ENCODE measurements at regions of chr14 and their contacts with region 1.

Region 1: DNA sequence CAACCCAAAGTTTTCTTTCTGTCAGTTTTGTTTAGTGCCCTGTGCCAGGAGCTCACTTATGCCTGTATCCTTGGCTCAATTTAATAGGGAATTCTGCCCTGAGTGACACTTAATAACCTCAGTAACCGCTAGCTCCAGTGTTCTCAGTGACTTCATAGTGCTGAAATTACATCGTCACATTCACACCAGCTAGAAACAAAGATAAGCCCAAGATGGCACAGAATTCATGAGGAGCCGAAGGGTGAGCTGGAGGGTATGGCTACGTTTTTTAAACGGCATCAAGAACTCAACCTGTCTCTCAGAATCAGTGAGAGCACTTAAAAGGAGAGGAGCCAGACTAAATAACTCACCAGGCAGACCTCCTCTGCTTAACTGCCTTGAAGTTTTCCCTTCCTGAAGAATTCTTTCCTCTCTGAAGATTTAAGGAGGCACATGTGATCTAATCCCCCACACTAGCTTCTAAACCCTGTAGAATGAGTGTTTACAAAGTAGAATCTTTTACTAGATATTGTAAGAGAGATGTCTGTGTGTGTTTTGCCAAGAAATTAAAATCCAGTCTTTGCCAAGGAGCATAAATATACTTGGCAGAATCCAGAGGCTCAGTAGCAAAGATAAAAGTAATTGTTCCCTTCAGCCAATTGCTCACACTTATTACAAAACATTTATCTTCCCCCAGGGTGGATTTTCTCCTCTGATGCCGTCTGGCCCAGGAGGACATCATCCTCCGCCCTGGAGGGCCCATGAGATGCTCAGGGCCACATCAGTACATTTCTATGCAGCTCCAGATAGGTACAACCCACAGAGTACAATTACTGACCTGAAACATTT is 37.3 kb downstream of the PTGER2 start:
- DNase-seq: peak in 2 of 9 donors; percentile 2 to 10
- ATAC-seq: peak; percentile 54
- H3K4me3 ChIP-seq: peak overlapping the region; percentile 18
- H3K4me3 Mint-ChIP-seq: peak overlapping the region; percentile 48 to 94 (median 76)
- H3K27ac ChIP-seq: peak overlapping the region; percentile 59
- H3K27ac Mint-ChIP-seq: peak overlapping the region; percentile 81 to 100 (median 88)
- H3K4me1 ChIP-seq: peaks cover 46 to 53% of the 10 kb centered on the region in 2 donors
- H3K4me1 Mint-ChIP-seq: peaks cover 36 to 76% (median 62%) of the 10 kb centered on the region in 7 donors
- H3K27me3 ChIP-seq: no peaks in the 10 kb centered on the region
- H3K27me3 Mint-ChIP-seq: peaks cover 0 to 4% (median 0%) of the 10 kb centered on the region in 5 donors

Region 2: DNA sequence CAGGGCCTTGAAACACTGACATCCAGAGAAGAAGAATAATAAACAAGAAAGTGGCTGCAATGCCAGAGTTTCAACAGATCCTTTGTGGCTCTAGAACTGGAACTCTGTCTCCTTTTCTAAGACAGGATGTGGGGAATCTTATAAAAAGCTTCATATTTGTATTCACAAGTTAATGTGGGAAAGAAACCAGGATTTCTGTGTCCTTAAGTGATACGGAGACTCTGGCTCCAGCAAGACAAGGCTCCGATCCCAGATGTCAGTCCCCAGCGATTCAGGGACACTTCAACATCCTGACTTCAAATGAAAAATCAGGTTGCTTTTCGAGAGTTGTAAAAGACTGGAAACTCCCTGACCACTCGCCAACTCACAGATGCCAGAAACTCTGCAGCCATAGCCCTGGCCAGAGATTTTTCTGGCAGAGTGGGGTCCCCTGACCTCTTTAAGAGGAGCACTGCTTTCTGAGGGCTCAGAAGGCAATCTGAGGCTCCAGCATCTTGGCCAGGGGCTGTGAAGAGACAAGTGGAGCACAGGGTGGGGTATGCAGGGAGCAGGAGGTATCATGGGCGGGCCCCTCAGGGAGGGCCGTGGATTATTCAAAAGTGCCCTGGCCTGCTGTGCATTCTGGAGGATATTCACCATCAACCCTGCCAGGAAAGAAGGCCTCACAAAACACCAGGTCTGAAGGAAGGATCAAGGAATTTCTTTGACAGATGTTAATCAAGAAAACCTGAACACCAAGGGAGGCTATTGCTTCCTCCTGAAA is 1058.1 kb before region 1 on chr14:
- CTCF ChIA-PET with region 1: no interaction called
- POLR2A ChIA-PET with region 1: no interaction called
- intact Hi-C with region 1: no loop called
- DNase-seq: no peak
- ATAC-seq: no peak
- H3K4me3 ChIP-seq: no peak overlapping the region
- H3K4me3 Mint-ChIP-seq: no peak overlapping the region
- H3K27ac ChIP-seq: no peak overlapping the region
- H3K27ac Mint-ChIP-seq: no peak overlapping the region
- H3K4me1 ChIP-seq: no peaks in the 10 kb centered on the region
- H3K4me1 Mint-ChIP-seq: peaks cover 0 to 4% (median 0%) of the 10 kb centered on the region in 7 donors
- H3K27me3 ChIP-seq: no peaks in the 10 kb centered on the region
- H3K27me3 Mint-ChIP-seq: no peaks in the 10 kb centered on the region

Region 3: GRCh38 chr14:51865953-51866747 is 485.3 kb before region 1 on chr14:
- CTCF ChIA-PET with region 1: no interaction called
- POLR2A ChIA-PET with region 1: no interaction called
- intact Hi-C with region 1: loop called in 1 of 2 experiments (anchors 5 kb)
- DNase-seq: peak in 3 of 9 donors; percentile 33 to 44 (median 37)
- ATAC-seq: peak; percentile 72
- H3K4me3 ChIP-seq: no peak overlapping the region
- H3K4me3 Mint-ChIP-seq: peak overlapping the region in 2 of 10 donors; percentile 10 to 27
- H3K27ac ChIP-seq: peak overlapping the region; percentile 50
- H3K27ac Mint-ChIP-seq: peak overlapping the region in 1 of 9 donors; percentile 11
- H3K4me1 ChIP-seq: peaks cover 57 to 63% of the 10 kb centered on the region in 2 donors
- H3K4me1 Mint-ChIP-seq: peaks cover 16 to 44% (median 28%) of the 10 kb centered on the region in 7 donors
- H3K27me3 ChIP-seq: no peaks in the 10 kb centered on the region
- H3K27me3 Mint-ChIP-seq: no peaks in the 10 kb centered on the region

Region 4: GRCh38 chr14:52313903-52314594 is 37.4 kb before region 1 on chr14 and contains the start of gene PTGER2:
- CTCF ChIA-PET with region 1: no interaction called
- POLR2A ChIA-PET with region 1: interaction called, 3 read pairs
- intact Hi-C with region 1: loop called (anchors 1 kb)
- DNase-seq: peak; percentile 12 to 91 (median 34)
- ATAC-seq: peak; percentile 79
- H3K4me3 ChIP-seq: peak within 1 kb of the TSS; percentile 80
- H3K4me3 Mint-ChIP-seq: peak within 1 kb of the TSS; percentile 88 to 100 (median 98)
- H3K27ac ChIP-seq: peak within 1 kb of the TSS; percentile 62
- H3K27ac Mint-ChIP-seq: peak within 1 kb of the TSS; percentile 51 to 98 (median 92)
- H3K4me1 ChIP-seq: peaks cover 14 to 26% of the 10 kb centered on the region in 2 donors
- H3K4me1 Mint-ChIP-seq: peaks cover 48 to 81% (median 57%) of the 10 kb centered on the region in 7 donors
- H3K27me3 ChIP-seq: no peaks in the 10 kb centered on the region
- H3K27me3 Mint-ChIP-seq: peaks cover 0 to 5% (median 0%) of the 10 kb centered on the region in 5 donors
- total RNA-seq, gene PTGER2: 1.7 to 162 (median 15.2) TPM

Region 5: GRCh38 chr14:52338051-52338681 is 13.3 kb before region 1 on chr14:
- CTCF ChIA-PET with region 1: no interaction called
- POLR2A ChIA-PET with region 1: interaction called, 3 read pairs
- intact Hi-C with region 1: loop called in 1 of 2 experiments (anchors 1 kb)
- DNase-seq: no peak
- ATAC-seq: no peak
- H3K4me3 ChIP-seq: no peak overlapping the region
- H3K4me3 Mint-ChIP-seq: peak overlapping the region in 1 of 10 donors; percentile 21
- H3K27ac ChIP-seq: no peak overlapping the region
- H3K27ac Mint-ChIP-seq: peak overlapping the region in 1 of 9 donors; percentile 13
- H3K4me1 ChIP-seq: peaks cover 0 to 4% of the 10 kb centered on the region in 2 donors
- H3K4me1 Mint-ChIP-seq: peaks cover 0 to 53% (median 5%) of the 10 kb centered on the region in 7 donors
- H3K27me3 ChIP-seq: no peaks in the 10 kb centered on the region
- H3K27me3 Mint-ChIP-seq: peaks cover 0 to 2% (median 0%) of the 10 kb centered on the region in 5 donors

Region 6: GRCh38 chr14:52413729-52414408 is 62.4 kb after region 1 on chr14:
- CTCF ChIA-PET with region 1: no interaction called
- POLR2A ChIA-PET with region 1: no interaction called
- intact Hi-C with region 1: loop called in 1 of 2 experiments (anchors 1 kb)
- DNase-seq: no peak
- ATAC-seq: no peak
- H3K4me3 ChIP-seq: no peak overlapping the region
- H3K4me3 Mint-ChIP-seq: peak overlapping the region in 2 of 10 donors; percentile 13 to 74
- H3K27ac ChIP-seq: no peak overlapping the region
- H3K27ac Mint-ChIP-seq: peak overlapping the region in 2 of 9 donors; percentile 29 to 90
- H3K4me1 ChIP-seq: no peaks in the 10 kb centered on the region
- H3K4me1 Mint-ChIP-seq: peaks cover 0 to 65% (median 6%) of the 10 kb centered on the region in 7 donors
- H3K27me3 ChIP-seq: no peaks in the 10 kb centered on the region
- H3K27me3 Mint-ChIP-seq: no peaks in the 10 kb centered on the region